ENCODE measurements at regions of chr15 and their contacts with region 1.

Region 1: GRCh38 chr15:89760303-89761008 is 9.4 kb upstream of the MESP1 start:
- DNase-seq: peak; percentile 59 to 73 (median 67)
- H3K4me3 ChIP-seq: no peak overlapping the region
- H3K27ac ChIP-seq: no peak overlapping the region
- H3K4me1 ChIP-seq: peaks cover 0 to 13% (median 3%) of the 10 kb centered on the region in 4 experiments
- H3K27me3 ChIP-seq: no peaks in the 10 kb centered on the region

Region 2: GRCh38 chr15:89776274-89777072 is 16.0 kb after region 1 on chr15 and contains the start of gene MESP2:
- CTCF ChIA-PET with region 1: interaction called, 36 read pairs
- POLR2A ChIA-PET with region 1: no interaction called
- DNase-seq: peak; percentile 31 to 64 (median 60)
- H3K4me3 ChIP-seq: peak within 1 kb of the TSS; percentile 15 to 75 (median 49)
- H3K27ac ChIP-seq: no peak within 1 kb of the TSS
- H3K4me1 ChIP-seq: peaks cover 0 to 30% (median 21%) of the 10 kb centered on the region in 4 experiments
- H3K27me3 ChIP-seq: peaks cover 0 to 16% (median 2%) of the 10 kb centered on the region in 5 experiments

Region 3: GRCh38 chr15:89837134-89837833 is 76.8 kb after region 1 on chr15:
- CTCF ChIA-PET with region 1: interaction called, 12 read pairs
- POLR2A ChIA-PET with region 1: no interaction called
- DNase-seq: peak in 2 of 3 donors; percentile 48 to 59
- H3K4me3 ChIP-seq: no peak overlapping the region
- H3K27ac ChIP-seq: peak overlapping the region in 1 of 2 experiments; percentile 55
- H3K4me1 ChIP-seq: peaks cover 13 to 31% (median 19%) of the 10 kb centered on the region in 4 experiments
- H3K27me3 ChIP-seq: no peaks in the 10 kb centered on the region

Region 4: GRCh38 chr15:89888214-89888804 is 127.9 kb after region 1 on chr15:
- CTCF ChIA-PET with region 1: interaction called, 51 read pairs
- POLR2A ChIA-PET with region 1: interaction called, 4 read pairs
- DNase-seq: peak; percentile 46 to 72 (median 58)
- H3K4me3 ChIP-seq: no peak overlapping the region
- H3K27ac ChIP-seq: no peak overlapping the region
- H3K4me1 ChIP-seq: peaks cover 3 to 8% (median 6%) of the 10 kb centered on the region in 4 experiments
- H3K27me3 ChIP-seq: no peaks in the 10 kb centered on the region